RWPE1 (cell line): ENCODE measurements at regions of chr11 and their contacts with region 1.

Region 1: GRCh38 chr11:47932544-47932943 is 47.8 kb upstream of the PTPRJ start:
- DNase-seq: no peak
- H3K27ac ChIP-seq: no peak overlapping the region
- CTCF ChIP-seq: no peak

Region 2: GRCh38 chr11:47899801-47900200 is 32.7 kb before region 1 on chr11:
- CTCF ChIA-PET with region 1: no interaction called
- POLR2A ChIA-PET with region 1: no interaction called
- DNase-seq: no peak
- H3K27ac ChIP-seq: no peak overlapping the region
- CTCF ChIP-seq: no peak

Region 3: DNA sequence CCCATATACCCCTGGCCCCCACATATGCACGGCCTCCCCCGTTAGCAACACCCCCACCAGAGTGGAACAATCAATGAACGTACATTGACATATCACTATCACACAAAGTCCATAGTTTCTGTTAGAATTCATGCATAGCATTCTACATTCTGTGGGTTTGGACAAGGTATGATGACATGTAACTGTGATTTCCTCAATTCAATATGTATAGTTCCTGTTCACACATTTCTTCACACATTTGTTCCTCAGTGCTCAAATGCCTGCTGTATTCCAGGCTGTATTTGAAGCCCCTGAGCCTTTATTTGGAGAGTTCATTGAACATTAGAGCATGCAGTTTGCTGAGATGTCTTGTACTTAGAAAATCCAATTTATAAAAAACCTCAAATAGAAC is 117.8 kb after region 1 on chr11:
- CTCF ChIA-PET with region 1: interaction called, 13 read pairs
- POLR2A ChIA-PET with region 1: no interaction called
- DNase-seq: no peak
- H3K27ac ChIP-seq: no peak overlapping the region
- CTCF ChIP-seq: no peak

Region 4: GRCh38 chr11:48109046-48109666 is 176.6 kb after region 1 on chr11:
- CTCF ChIA-PET with region 1: interaction called, 108 read pairs
- POLR2A ChIA-PET with region 1: no interaction called
- DNase-seq: peak; percentile 60
- H3K27ac ChIP-seq: no peak overlapping the region
- CTCF ChIP-seq: no peak

Region 5: GRCh38 chr11:48366365-48366764 is 433.8 kb after region 1 on chr11 and contains the start of gene OR4C5:
- CTCF ChIA-PET with region 1: no interaction called
- POLR2A ChIA-PET with region 1: no interaction called
- DNase-seq: no peak
- H3K27ac ChIP-seq: no peak within 1 kb of the TSS
- CTCF ChIP-seq: no peak